Cardiac septum (tissue), 1 donor: ENCODE measurements at regions of chr9 and their contacts with region 1.

Region 1: GRCh38 chr9:131393622-131394463 is at the start of gene PRRC2B:
- DNase-seq: peak; percentile 95
- total RNA-seq, gene PRRC2B: 151 TPM

Region 2: GRCh38 chr9:131197160-131197911 is 196.5 kb before region 1 on chr9:
- intact Hi-C with region 1: no loop called
- DNase-seq: no peak

Region 3: GRCh38 chr9:131441441-131441840 is 47.6 kb after region 1 on chr9:
- intact Hi-C with region 1: no loop called
- DNase-seq: peak; percentile 44

Region 4: GRCh38 chr9:131478421-131478868 is 84.6 kb after region 1 on chr9:
- intact Hi-C with region 1: loop called (anchors 5 kb)
- DNase-seq: peak; percentile 75

Region 5: DNA sequence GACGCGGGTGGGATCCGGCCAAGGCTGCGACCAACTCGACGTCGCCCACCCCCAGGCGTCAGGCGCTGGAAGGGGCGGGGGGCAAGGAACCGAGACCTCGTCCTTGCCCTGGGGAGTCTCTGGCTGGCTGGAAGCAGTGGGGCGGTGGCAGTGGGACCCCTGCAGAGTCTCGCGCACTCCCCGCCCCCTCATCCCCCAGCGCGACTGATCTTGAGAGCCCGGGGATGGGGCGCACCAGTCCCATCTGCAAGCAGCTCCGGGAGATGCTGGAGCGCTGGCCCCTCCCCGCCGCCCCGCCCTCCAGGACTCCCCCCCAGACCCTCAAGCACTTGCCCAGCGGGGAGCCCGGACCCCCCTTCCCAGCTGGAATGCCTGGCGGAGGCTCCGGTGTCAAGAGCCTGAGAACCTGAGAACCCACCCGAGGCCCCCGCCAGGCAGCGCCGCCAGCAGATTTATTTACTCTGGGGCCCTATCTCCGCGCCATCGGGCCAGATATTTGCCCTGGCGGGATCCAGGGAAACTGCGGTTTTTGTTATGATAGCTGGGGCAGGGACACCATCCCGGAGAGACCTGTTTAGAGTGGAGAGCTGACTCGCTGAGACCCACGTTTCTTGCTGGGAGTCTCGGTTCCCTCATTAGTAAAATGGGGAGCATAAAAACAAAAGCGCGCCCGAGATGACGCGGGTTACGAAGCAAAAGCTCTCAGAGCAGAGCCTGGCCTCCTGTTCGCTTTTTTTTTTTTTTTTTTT is 152.7 kb after region 1 on chr9:
- intact Hi-C with region 1: no loop called
- DNase-seq: no peak